ENCODE measurements at regions of chr5 and their contacts with region 1.

Region 1: DNA sequence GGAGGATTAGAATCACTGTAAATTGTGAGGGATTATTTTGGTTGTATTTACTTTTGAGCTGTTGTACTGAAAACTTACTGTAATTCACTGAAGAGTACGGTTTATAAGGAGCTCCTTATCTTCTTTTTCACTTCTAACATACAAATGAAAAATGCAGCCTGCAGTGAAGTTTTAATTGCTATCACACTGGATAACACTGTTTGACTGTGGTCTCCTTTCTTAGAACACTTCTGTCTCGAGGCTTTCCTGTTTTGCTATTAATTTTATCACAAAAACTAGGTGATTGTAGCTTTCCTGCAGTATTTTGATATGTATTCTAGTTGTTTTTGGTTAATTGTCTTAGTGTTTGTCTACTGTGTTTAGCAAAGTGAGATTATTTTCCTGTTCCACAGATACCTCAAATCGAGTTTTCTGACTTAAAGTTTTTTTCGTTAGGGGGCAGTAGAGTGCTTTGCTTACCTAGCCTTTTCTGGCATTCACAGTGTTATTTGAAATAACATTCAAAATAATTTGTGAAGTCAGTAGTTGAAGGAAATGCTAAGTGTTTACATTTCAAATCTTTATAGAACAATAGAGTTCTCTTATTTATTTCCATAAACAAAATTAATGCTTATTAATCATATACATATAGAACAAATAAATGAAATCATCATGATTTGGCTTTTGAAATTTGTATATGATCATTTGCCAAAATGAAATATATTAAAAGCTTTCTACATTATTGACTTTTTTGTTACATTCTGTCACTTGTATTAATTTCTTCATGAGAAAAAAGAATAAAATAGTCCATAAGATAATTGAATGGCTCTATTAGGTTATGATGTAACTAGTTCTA is 52.9 kb downstream of the COMMD10 start:
- DNase-seq: peak; percentile 12
- ATAC-seq: peak; percentile 72
- H3K4me3 ChIP-seq: no peak overlapping the region
- H3K27ac ChIP-seq: no peak overlapping the region
- H3K4me1 ChIP-seq: peaks cover 3% of the 10 kb centered on the region; the same call in 1 of the 2 replicates
- H3K27me3 ChIP-seq: no peaks in the 10 kb centered on the region
- CTCF ChIP-seq: peak; percentile 55 to 70 (median 62); a peak in 5 of 6 replicates
- EP300 ChIP-seq: no peak
- POLR2A ChIP-seq: no peak
- RAD21 ChIP-seq: peak; percentile 95

Region 2: DNA sequence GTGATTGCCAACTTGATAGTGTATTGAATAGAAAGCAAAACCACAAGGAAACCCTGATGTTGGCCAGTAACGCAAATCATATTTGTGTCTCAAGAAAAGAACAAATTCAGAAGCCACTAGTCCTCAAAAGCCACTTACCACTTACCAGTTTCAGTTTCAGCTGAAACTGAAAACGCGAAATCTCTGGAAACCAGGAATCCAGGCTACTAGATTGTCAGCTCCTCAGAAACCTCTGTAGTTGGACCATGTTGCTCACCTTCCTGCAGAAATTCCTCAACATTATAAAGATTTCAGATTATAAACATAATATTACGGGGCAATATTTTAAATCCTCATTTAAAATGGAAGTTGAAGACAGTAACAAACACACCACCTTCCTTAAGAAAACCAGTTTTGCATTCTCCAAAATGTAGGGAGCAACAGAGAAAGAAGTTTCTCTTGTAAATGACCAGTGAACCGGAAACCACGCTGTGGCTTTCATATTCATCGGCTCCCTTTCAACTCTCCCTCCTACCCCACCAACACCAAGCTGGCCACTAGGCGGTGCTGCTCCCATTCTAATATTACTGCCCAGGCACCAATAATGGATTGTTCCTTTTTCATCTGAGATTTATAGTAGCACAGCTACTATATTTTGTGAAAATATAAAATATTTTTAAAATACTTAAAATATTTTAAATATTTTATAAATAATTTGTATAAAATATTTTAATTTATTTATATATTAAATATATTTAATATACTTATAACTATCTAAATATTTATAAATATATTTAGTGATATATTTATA is 503.2 kb before region 1 on chr5:
- CTCF ChIA-PET with region 1: interaction called, 4 read pairs
- POLR2A ChIA-PET with region 1: no interaction called
- RAD21 ChIA-PET with region 1: no interaction called
- SMC1A ChIA-PET with region 1: interaction called, 3 read pairs
- in situ Hi-C with region 1: no loop called
- intact Hi-C with region 1: loop called (anchors 5 kb)
- DNase-seq: peak; percentile 73
- ATAC-seq: peak; percentile 86
- H3K4me3 ChIP-seq: peak overlapping the region; percentile 58
- H3K27ac ChIP-seq: no peak overlapping the region
- H3K4me1 ChIP-seq: peaks cover 18% of the 10 kb centered on the region
- H3K27me3 ChIP-seq: peaks cover 2 to 13% of the 10 kb centered on the region in 2 experiments; a peak in 2 of 4 replicates
- CTCF ChIP-seq: peak; percentile 94 to 99 (median 96); a peak in 5 of 6 replicates
- EP300 ChIP-seq: peak; percentile 7 to 25; a peak in 1 of 4 replicates
- POLR2A ChIP-seq: no peak
- RAD21 ChIP-seq: peak; percentile 99

Region 3: DNA sequence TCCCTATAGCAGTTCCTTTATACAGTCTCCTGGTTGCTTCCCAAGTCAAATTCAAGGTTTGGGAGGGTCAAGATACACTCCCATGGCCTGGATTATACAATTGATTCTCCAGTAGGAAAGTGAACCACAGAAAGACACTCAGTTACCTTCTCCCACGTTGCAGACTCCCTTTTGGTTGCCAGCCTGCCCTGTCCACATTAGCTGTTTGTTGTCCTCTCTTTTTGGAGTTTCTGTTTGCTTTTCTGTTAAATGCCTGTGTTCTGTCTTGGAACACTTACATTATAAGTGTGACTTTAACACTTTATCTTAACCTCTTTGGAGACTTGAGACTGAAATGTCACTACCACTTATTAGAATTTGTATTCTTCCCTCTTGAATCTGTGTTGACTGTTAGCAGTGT is 22.6 kb before region 1 on chr5:
- CTCF ChIA-PET with region 1: no interaction called
- POLR2A ChIA-PET with region 1: no interaction called
- RAD21 ChIA-PET with region 1: no interaction called
- SMC1A ChIA-PET with region 1: no interaction called
- in situ Hi-C with region 1: no loop called
- intact Hi-C with region 1: no loop called
- DNase-seq: no peak
- ATAC-seq: no peak
- H3K4me3 ChIP-seq: no peak overlapping the region
- H3K27ac ChIP-seq: no peak overlapping the region
- H3K4me1 ChIP-seq: no peaks in the 10 kb centered on the region
- H3K27me3 ChIP-seq: no peaks in the 10 kb centered on the region
- CTCF ChIP-seq: no peak
- EP300 ChIP-seq: no peak
- POLR2A ChIP-seq: no peak
- RAD21 ChIP-seq: no peak

Region 4: DNA sequence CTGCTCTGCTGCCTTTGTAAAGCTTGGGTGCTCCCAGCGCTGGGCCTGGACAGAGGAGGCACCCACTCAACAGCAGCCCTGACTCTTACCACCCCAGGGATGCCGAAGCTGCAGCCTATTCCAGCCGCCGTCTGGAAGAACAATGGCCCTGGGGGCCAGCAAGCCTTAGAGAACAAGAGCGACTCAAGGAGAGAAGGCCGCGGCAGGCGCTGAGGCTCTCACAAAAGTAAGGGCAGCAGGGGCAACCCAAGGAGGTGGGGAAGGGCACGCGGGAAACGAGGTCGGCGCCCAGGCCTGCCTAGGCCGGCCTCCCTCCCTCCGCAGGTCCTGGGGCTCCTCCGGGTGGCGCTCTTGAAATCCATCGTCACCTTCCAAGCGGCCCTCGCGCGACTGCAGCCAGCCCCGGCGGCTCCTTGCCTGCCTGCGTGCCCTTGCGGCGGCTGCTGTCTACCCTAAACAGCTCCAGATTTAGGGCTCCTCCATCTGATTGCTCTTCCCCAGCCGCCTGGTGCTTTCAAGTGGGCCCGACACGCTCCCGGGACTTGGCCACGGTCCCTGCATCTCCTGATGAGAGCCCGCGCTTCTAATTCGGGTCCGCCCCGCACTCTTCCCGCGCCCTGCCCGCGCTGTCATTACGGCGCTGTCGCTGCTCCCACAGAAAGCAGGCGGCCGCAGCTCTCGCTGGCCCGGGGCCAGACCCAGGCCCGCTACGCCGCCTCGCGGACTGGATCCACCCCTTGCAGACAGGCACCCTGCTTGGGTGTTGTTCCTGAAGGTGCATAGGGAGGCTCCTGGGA is 223.6 kb after region 1 on chr5:
- CTCF ChIA-PET with region 1: interaction called, 24 read pairs
- POLR2A ChIA-PET with region 1: interaction called, 3 read pairs
- RAD21 ChIA-PET with region 1: interaction called, 34 read pairs
- SMC1A ChIA-PET with region 1: interaction called, 43 read pairs
- in situ Hi-C with region 1: no loop called
- intact Hi-C with region 1: loop called (anchors 10 kb)
- DNase-seq: no peak
- ATAC-seq: no peak
- H3K4me3 ChIP-seq: no peak overlapping the region
- H3K27ac ChIP-seq: no peak overlapping the region
- H3K4me1 ChIP-seq: peaks cover 38% of the 10 kb centered on the region
- H3K27me3 ChIP-seq: no peaks in the 10 kb centered on the region
- CTCF ChIP-seq: no peak
- EP300 ChIP-seq: no peak
- POLR2A ChIP-seq: no peak
- RAD21 ChIP-seq: no peak

Region 5: DNA sequence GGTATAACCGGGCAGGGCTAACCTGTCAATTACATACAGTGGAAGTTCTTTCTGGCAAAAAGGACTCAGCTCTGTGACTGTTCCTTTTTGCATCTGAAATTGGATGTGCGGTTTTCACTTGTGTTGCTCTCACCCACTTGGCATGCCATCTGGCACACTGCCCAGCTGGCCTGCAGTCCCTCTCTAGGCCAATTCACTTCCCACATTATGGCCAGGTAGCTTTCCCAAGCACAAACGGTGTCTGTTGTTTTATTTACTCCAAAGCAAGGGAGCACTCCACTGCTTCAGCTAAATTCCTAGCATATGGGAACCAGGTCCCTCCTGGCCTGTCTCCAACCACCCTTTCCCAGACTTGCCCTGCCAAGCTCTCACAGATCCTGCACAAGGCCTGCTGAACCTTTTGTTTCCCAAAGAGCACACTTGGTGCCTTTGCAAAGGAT is 304.4 kb after region 1 on chr5:
- CTCF ChIA-PET with region 1: interaction called, 23 read pairs
- POLR2A ChIA-PET with region 1: no interaction called
- RAD21 ChIA-PET with region 1: interaction called, 10 read pairs
- SMC1A ChIA-PET with region 1: interaction called, 8 read pairs
- in situ Hi-C with region 1: no loop called
- intact Hi-C with region 1: no loop called
- DNase-seq: no peak
- ATAC-seq: no peak
- H3K4me3 ChIP-seq: no peak overlapping the region
- H3K27ac ChIP-seq: no peak overlapping the region
- H3K4me1 ChIP-seq: peaks cover 4% of the 10 kb centered on the region; the same call in 1 of the 2 replicates
- H3K27me3 ChIP-seq: no peaks in the 10 kb centered on the region
- CTCF ChIP-seq: no peak
- EP300 ChIP-seq: no peak
- POLR2A ChIP-seq: no peak
- RAD21 ChIP-seq: no peak

Region 6: DNA sequence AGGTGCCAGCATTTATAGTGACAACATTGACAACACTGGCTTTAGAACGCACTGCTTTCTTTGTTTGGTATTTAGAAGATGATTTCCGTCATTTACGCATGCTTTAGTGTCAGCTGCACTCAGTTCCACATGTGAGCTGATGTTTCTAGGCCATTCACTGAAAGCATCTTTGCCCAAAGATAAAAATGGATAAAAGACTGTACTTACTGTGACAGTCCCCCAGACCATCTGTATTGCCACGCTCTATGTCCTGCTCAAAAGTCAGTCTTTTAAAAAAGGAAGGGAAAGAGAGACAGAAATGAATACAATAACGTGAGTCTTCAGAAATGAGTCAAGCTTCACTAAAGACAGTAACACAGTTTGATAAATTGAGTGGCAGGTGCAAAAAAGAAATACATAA is 337.6 kb after region 1 on chr5:
- CTCF ChIA-PET with region 1: interaction called, 11 read pairs
- POLR2A ChIA-PET with region 1: no interaction called
- RAD21 ChIA-PET with region 1: no interaction called
- SMC1A ChIA-PET with region 1: interaction called, 4 read pairs
- in situ Hi-C with region 1: no loop called
- intact Hi-C with region 1: no loop called
- DNase-seq: no peak
- ATAC-seq: peak; percentile 80
- H3K4me3 ChIP-seq: no peak overlapping the region
- H3K27ac ChIP-seq: no peak overlapping the region
- H3K4me1 ChIP-seq: no peaks in the 10 kb centered on the region; the same call in 1 of the 2 replicates
- H3K27me3 ChIP-seq: no peaks in the 10 kb centered on the region
- CTCF ChIP-seq: no peak
- EP300 ChIP-seq: no peak
- POLR2A ChIP-seq: no peak
- RAD21 ChIP-seq: no peak

Region 7: GRCh38 chr5:116497631-116498030 is 359.9 kb after region 1 on chr5:
- CTCF ChIA-PET with region 1: interaction called, 14 read pairs
- POLR2A ChIA-PET with region 1: no interaction called
- RAD21 ChIA-PET with region 1: interaction called, 17 read pairs
- SMC1A ChIA-PET with region 1: interaction called, 24 read pairs
- in situ Hi-C with region 1: no loop called
- intact Hi-C with region 1: no loop called
- DNase-seq: no peak
- ATAC-seq: no peak
- H3K4me3 ChIP-seq: no peak overlapping the region
- H3K27ac ChIP-seq: no peak overlapping the region
- H3K4me1 ChIP-seq: no peaks in the 10 kb centered on the region
- H3K27me3 ChIP-seq: no peaks in the 10 kb centered on the region
- CTCF ChIP-seq: no peak; a peak in 1 of 6 replicates
- EP300 ChIP-seq: no peak
- POLR2A ChIP-seq: no peak
- RAD21 ChIP-seq: peak; percentile 17; the same call in 1 of the 2 replicates

Region 8: GRCh38 chr5:116947691-116948528 is 810.1 kb after region 1 on chr5:
- CTCF ChIA-PET with region 1: interaction called, 7 read pairs
- POLR2A ChIA-PET with region 1: no interaction called
- RAD21 ChIA-PET with region 1: interaction called, 3 read pairs
- SMC1A ChIA-PET with region 1: interaction called, 3 read pairs
- in situ Hi-C with region 1: loop called (anchors 5 kb)
- intact Hi-C with region 1: loop called (anchors 1 kb)
- DNase-seq: peak; percentile 87
- ATAC-seq: peak; percentile 100
- H3K4me3 ChIP-seq: no peak overlapping the region
- H3K27ac ChIP-seq: no peak overlapping the region
- H3K4me1 ChIP-seq: peaks cover 3% of the 10 kb centered on the region
- H3K27me3 ChIP-seq: peaks cover 0 to 1% of the 10 kb centered on the region in 2 experiments; a peak in 1 of 4 replicates
- CTCF ChIP-seq: peak; percentile 88 to 94 (median 92)
- EP300 ChIP-seq: 0 out of 4 replicates have a peak, but pooled peaks of 1 of the 2 experiments have one; percentile 35
- POLR2A ChIP-seq: no peak
- RAD21 ChIP-seq: peak; percentile 98

Region 9: DNA sequence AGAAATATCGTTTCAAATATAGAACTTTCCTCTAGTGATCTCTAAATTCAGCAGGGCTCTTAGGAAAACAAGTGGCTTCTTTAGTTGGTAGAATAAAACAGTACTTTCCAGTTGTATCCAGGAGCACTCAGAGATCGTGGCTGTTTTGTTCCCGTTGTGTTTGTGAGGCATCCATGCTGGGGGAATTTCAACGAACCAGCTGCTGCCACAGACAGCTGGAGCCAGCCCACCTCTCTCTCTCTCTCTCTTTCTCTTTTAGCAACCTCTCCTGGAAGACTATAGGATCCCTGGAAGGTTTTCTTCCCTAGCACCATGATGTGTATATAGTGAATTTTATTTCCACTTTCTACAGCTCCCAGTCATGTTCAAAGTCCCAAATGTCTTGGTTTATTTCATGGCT is 1552.9 kb after region 1 on chr5:
- CTCF ChIA-PET with region 1: no interaction called
- POLR2A ChIA-PET with region 1: no interaction called
- RAD21 ChIA-PET with region 1: no interaction called
- SMC1A ChIA-PET with region 1: no interaction called
- in situ Hi-C with region 1: no loop called
- intact Hi-C with region 1: no loop called
- DNase-seq: no peak
- ATAC-seq: no peak
- H3K4me3 ChIP-seq: no peak overlapping the region
- H3K27ac ChIP-seq: no peak overlapping the region
- H3K4me1 ChIP-seq: no peaks in the 10 kb centered on the region
- H3K27me3 ChIP-seq: no peaks in the 10 kb centered on the region
- CTCF ChIP-seq: no peak
- EP300 ChIP-seq: no peak
- POLR2A ChIP-seq: no peak
- RAD21 ChIP-seq: no peak

Measured in GM12878 (cell line).